ENCODE measurements at regions of chr7 and their contacts with region 1.

Region 1: GRCh38 chr7:44082541-44083207 is 344 bp upstream of the POLM start:
- DNase-seq: peak; percentile 95
- ATAC-seq: peak; percentile 96
- H3K4me3 ChIP-seq: peak overlapping the region; percentile 59
- H3K27ac ChIP-seq: peak overlapping the region; percentile 69
- H3K4me1 ChIP-seq: peaks cover 12 to 23% of the 10 kb centered on the region in 2 experiments; a peak in 3 of 4 replicates
- H3K27me3 ChIP-seq: no peaks in the 10 kb centered on the region
- CTCF ChIP-seq: no peak
- POLR2A ChIP-seq: no peak
- RAD21 ChIP-seq: no peak

Region 2: GRCh38 chr7:44123190-44124003 is 40.7 kb after region 1 on chr7 and contains the start of gene POLD2:
- CTCF ChIA-PET with region 1: no interaction called
- POLR2A ChIA-PET with region 1: no interaction called
- RAD21 ChIA-PET with region 1: no interaction called
- intact Hi-C with region 1: loop called (anchors 5 kb)
- DNase-seq: peak; percentile 88
- ATAC-seq: peak; percentile 98
- H3K4me3 ChIP-seq: peak within 1 kb of the TSS; percentile 69 to 92
- H3K27ac ChIP-seq: peak within 1 kb of the TSS; percentile 73
- H3K4me1 ChIP-seq: peaks cover 3 to 19% of the 10 kb centered on the region in 2 experiments; a peak in 2 of 4 replicates
- H3K27me3 ChIP-seq: no peaks in the 10 kb centered on the region
- CTCF ChIP-seq: no peak
- POLR2A ChIP-seq: peak; percentile 54
- RAD21 ChIP-seq: no peak
- total RNA-seq, gene POLD2: 237 TPM

Region 3: DNA sequence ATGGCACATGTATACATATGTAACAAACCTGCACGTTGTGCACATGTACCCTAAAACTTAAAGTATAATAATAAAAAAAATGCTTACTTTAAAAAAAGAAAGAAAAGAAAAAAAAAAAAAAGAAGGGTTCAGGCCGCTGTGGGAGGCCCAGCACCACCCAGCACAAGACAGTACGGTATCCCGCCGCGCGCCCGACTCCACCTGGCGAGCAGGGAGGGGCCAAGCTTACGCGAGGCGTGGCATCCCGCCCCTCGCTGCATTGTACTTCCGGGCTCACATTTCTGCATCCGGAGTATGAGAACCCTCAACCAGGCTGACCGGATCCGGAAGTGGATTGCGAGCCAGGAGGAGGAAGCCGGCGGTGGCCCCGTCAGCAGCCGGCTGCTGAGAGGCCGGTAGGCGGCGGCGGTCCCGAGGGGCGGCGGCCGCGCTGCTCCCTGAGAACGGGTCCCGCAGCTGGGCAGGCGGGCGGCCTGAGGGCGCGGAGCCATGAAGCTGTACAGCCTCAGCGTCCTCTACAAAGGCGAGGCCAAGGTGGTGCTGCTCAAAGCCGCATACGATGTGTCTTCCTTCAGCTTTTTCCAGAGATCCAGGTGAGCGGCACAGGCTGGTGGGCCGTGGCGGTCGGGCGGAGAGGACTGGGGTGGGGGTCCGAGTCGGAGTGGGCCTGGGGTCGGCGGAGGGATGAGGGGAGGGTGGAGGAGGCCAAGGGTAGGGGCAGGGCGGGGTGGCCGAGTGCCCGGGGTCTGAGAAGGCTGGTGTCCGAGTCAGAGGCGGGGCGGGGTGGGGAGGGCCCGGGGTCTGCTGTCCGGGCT is 118.2 kb after region 1 on chr7 and contains the start of gene YKT6:
- CTCF ChIA-PET with region 1: no interaction called
- POLR2A ChIA-PET with region 1: interaction called, 6 read pairs
- RAD21 ChIA-PET with region 1: no interaction called
- intact Hi-C with region 1: loop called (anchors 2 kb)
- DNase-seq: peak; percentile 94
- ATAC-seq: peak; percentile 97
- H3K4me3 ChIP-seq: peak within 1 kb of the TSS; percentile 95 to 98
- H3K27ac ChIP-seq: peak within 1 kb of the TSS; percentile 57
- H3K4me1 ChIP-seq: peaks cover 10 to 16% of the 10 kb centered on the region in 2 experiments; a peak in 2 of 4 replicates
- H3K27me3 ChIP-seq: no peaks in the 10 kb centered on the region
- CTCF ChIP-seq: peak in 2 of 3 experiments; percentile 44 to 69; a peak in 4 of 6 replicates
- POLR2A ChIP-seq: peak; percentile 75
- RAD21 ChIP-seq: no peak
- total RNA-seq, gene YKT6: 84.8 TPM

Region 4: DNA sequence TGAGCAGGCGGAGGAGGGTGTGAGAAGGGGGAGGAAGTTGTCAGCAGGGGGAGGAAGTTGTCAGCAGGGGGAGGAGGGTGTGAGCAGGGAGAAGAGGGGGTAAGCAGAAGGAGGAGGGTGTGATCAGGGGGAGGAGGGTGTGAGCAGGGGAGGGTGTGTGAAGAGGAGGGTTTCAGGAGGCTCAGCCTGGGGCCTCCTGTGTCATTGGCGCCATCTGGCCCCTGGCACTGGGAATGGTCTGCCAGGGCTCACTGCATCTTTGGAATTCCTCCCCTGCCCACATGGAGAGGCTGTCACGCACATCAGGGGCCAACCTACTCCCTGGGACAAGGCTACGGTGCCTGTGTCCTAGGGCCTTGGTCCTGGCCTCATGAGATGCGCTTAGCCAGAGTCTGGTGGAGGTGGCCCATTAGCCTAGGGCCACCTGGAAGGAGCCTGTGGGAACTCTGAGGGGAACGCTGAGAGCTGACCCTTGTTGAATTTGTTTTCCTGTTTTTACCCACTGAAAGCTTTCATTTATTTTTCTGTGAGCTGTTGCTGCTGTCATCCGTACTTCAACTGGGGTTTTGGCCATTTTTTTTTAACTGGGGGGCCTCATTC is 224.7 kb after region 1 on chr7:
- CTCF ChIA-PET with region 1: no interaction called
- POLR2A ChIA-PET with region 1: no interaction called
- RAD21 ChIA-PET with region 1: no interaction called
- intact Hi-C with region 1: loop called (anchors 5 kb)
- DNase-seq: peak; percentile 43
- ATAC-seq: peak; percentile 93
- H3K4me3 ChIP-seq: peak overlapping the region; percentile 14 to 15
- H3K27ac ChIP-seq: peak overlapping the region; percentile 31
- H3K4me1 ChIP-seq: peaks cover 14 to 22% of the 10 kb centered on the region in 2 experiments; a peak in 3 of 4 replicates
- H3K27me3 ChIP-seq: no peaks in the 10 kb centered on the region
- CTCF ChIP-seq: peak; percentile 37 to 70 (median 51)
- POLR2A ChIP-seq: no peak
- RAD21 ChIP-seq: peak; percentile 83